Right lobe of liver (tissue), 6 donors: ENCODE measurements at regions of chr17 and their contacts with region 1.

Region 1: DNA sequence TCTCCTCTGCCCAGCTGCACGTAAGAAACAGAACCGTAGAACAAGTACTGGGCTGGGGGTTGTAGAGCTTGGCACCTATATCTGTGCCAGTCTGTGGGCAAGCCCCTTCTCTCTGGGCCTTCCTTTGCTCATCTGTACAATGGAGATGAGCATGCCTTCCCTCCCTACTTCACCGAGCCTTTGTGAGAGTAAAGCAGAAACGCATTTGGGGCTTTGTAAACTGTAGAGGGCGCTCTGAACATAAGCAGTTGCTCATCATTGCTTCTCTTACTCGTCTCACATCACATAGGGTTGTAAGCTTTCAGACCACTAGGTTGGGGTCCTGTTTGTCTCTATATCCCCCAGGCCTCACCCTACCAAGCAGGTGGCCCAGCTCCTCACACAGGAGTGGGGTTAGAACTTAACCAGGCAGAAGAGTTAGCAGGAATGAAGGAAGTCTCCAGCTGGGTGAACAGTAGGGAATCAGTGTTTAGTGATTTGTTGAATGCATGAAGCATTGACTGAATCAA is 15.1 kb downstream of the SAMD14 start:
- DNase-seq: peak in 1 of 3 donors; percentile 46
- ATAC-seq: peak in 2 of 4 donors; percentile 9 to 12
- H3K4me3 ChIP-seq: no peak overlapping the region
- H3K27ac ChIP-seq: no peak overlapping the region
- H3K4me1 ChIP-seq: peaks cover 0 to 32% (median 5%) of the 10 kb centered on the region in 4 donors
- H3K27me3 ChIP-seq: no peaks in the 10 kb centered on the region
- CTCF ChIP-seq: peak; percentile 41 to 58 (median 52)
- POLR2A ChIP-seq: no peak

Region 2: DNA sequence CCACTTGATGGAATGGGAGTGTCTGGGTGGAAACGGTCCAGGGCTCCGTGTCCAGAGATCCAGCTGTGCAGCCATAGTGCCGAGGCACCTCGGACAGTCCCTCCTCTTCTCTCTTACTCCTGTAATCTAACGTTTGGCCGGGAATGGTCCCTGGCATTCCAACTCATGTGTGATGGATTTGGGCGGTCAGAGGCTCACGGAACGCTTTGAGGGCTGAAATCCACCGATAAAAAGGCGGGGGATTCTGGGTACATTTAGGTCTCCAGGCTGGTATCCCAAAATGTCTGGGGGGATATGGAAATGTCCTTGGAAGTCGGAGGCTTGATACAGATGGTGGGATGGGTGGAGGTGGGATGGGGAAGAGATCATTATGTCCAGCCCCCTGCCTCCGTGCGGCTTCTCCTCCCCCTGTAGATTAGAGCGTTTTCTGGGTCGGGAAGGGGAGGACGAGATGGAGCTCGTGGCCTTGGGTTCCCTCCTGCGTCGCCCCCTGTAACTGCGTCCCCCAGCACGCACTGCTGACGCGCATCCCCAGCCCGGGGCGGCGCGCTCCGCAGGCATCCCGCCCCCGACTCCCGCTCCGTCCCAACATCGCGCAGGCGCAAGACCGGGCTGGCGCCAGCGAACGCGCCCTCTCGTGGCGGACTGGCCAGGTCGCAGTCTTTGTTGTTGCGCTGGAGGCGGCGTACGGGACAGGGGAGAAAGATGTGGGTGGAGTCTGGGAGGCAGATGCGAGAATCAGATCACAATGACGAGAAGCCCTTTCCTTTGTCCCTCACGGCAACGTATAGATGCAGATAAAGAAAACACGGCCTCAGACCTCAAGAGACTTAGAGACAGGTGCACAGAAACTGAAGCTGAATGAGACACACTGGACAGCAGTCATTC is 46.4 kb after region 1 on chr17:
- intact Hi-C with region 1: loop called (anchors 10 kb)
- DNase-seq: peak; percentile 91 to 93 (median 92)
- ATAC-seq: peak; percentile 97 to 99 (median 98)
- H3K4me3 ChIP-seq: peak overlapping the region; percentile 27 to 57 (median 49)
- H3K27ac ChIP-seq: no peak overlapping the region
- H3K4me1 ChIP-seq: peaks cover 0 to 4% (median 2%) of the 10 kb centered on the region in 4 donors
- H3K27me3 ChIP-seq: no peaks in the 10 kb centered on the region
- CTCF ChIP-seq: peak; percentile 94 to 97 (median 95)
- POLR2A ChIP-seq: peak; percentile 18

Region 3: DNA sequence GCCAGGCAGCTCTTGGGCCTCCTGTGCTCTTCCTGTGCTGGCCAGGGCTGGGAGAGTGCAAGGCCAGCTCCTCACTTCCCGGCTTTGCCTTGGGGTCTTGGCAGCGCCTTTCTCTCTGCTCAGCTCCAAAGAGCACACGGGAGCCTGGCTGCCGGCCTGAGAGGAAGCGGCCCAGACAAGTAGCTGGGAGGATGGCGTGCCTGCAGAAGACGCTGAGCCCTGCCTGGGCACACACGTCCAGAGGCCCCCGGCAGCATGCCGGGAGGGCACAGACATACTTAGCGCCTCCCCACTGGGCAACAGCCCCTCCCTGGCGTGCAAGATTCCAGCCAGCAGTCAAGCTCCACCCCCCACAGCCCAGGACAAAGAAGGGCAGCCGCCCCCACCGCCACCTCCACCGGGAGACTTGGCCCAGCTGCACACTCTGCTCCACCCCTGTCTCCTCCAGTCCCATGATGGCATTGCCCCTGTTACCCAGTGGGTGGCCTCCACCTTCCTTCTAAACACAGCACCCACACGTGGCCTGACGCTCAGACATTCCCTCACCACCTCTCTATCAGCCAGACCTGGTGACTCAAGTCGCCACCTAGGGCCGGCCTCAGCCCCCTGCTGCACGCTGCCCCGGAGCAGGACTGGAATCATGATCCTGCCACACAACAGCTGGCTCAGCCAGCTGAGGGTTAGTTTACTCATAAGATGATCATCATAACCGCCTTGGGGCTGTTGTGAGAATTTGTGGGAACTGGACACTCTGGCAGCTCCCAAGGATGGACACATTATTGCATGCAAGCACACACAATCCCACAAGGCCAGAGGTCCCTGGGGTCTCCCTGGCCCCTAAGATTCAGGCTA is 63.3 kb after region 1 on chr17:
- intact Hi-C with region 1: no loop called
- DNase-seq: peak in 2 of 3 donors; percentile 72 to 77
- ATAC-seq: peak; percentile 80 to 89 (median 84)
- H3K4me3 ChIP-seq: no peak overlapping the region
- H3K27ac ChIP-seq: peak overlapping the region in 1 of 3 donors; percentile 18
- H3K4me1 ChIP-seq: peaks cover 0 to 11% (median 0%) of the 10 kb centered on the region in 4 donors
- H3K27me3 ChIP-seq: no peaks in the 10 kb centered on the region
- CTCF ChIP-seq: peak; percentile 24 to 55 (median 48)
- POLR2A ChIP-seq: no peak

Region 4: GRCh38 chr17:50304781-50305404 is 190.0 kb after region 1 on chr17:
- intact Hi-C with region 1: no loop called
- DNase-seq: no peak
- ATAC-seq: peak in 1 of 4 donors; percentile 17
- H3K4me3 ChIP-seq: no peak overlapping the region
- H3K27ac ChIP-seq: no peak overlapping the region
- H3K4me1 ChIP-seq: no peaks in the 10 kb centered on the region
- H3K27me3 ChIP-seq: no peaks in the 10 kb centered on the region
- CTCF ChIP-seq: no peak
- POLR2A ChIP-seq: no peak

Region 5: GRCh38 chr17:50394711-50395110 is 279.8 kb after region 1 on chr17:
- intact Hi-C with region 1: no loop called
- DNase-seq: no peak
- ATAC-seq: no peak
- H3K4me3 ChIP-seq: no peak overlapping the region
- H3K27ac ChIP-seq: no peak overlapping the region
- H3K4me1 ChIP-seq: peaks cover 0 to 22% (median 8%) of the 10 kb centered on the region in 4 donors
- H3K27me3 ChIP-seq: no peaks in the 10 kb centered on the region
- CTCF ChIP-seq: no peak
- POLR2A ChIP-seq: no peak